OCI-LY7 (cell line): ENCODE measurements at regions of chr13 and their contacts with region 1.

Region 1: GRCh38 chr13:51412431-51412830 is 40.4 kb downstream of the INTS6 start:
- DNase-seq: no peak
- H3K4me3 ChIP-seq: no peak overlapping the region
- H3K27ac ChIP-seq: no peak overlapping the region
- H3K4me1 ChIP-seq: peaks cover 11% of the 10 kb centered on the region
- CTCF ChIP-seq: no peak

Region 2: DNA sequence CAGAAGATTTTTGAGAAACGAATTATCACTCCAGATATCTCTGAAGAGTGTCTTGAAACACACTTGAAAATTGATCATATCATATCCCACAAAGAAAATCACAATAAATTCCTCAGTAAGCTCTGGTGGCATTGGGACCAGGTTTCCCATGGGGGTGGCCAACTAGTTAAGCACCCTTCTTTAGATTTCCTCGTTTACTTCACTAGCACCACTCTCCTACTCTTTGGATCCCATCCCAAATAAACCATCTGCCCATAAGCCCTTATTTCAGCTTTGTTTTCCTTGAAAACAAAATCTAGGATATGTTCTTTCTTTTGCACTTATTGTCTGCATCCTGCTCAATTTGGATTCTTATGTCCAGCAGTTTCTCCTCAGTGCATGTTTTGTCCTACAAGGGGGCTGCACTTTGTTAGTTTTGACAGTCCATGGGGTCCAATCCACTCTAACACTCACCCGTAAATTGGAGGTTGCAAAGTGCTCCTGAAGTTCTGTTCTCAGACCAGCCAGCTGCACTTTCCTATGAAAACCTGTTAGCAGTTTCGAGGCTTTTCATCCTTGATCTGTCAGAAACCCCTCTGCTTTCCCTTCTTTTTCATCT is 230.5 kb before region 1 on chr13:
- CTCF ChIA-PET with region 1: no interaction called
- POLR2A ChIA-PET with region 1: no interaction called
- intact Hi-C with region 1: no loop called
- DNase-seq: no peak
- H3K4me3 ChIP-seq: no peak overlapping the region
- H3K27ac ChIP-seq: no peak overlapping the region
- H3K4me1 ChIP-seq: no peaks in the 10 kb centered on the region
- CTCF ChIP-seq: no peak

Region 3: GRCh38 chr13:51397262-51397941 is 15.0 kb before region 1 on chr13:
- CTCF ChIA-PET with region 1: no interaction called
- POLR2A ChIA-PET with region 1: interaction called, 13 read pairs
- intact Hi-C with region 1: no loop called
- DNase-seq: no peak
- H3K4me3 ChIP-seq: no peak overlapping the region
- H3K27ac ChIP-seq: no peak overlapping the region
- H3K4me1 ChIP-seq: peaks cover 16% of the 10 kb centered on the region
- CTCF ChIP-seq: no peak